Heart right ventricle (tissue), 16 donors: ENCODE measurements at regions of chr17 and their contacts with region 1.

Region 1: DNA sequence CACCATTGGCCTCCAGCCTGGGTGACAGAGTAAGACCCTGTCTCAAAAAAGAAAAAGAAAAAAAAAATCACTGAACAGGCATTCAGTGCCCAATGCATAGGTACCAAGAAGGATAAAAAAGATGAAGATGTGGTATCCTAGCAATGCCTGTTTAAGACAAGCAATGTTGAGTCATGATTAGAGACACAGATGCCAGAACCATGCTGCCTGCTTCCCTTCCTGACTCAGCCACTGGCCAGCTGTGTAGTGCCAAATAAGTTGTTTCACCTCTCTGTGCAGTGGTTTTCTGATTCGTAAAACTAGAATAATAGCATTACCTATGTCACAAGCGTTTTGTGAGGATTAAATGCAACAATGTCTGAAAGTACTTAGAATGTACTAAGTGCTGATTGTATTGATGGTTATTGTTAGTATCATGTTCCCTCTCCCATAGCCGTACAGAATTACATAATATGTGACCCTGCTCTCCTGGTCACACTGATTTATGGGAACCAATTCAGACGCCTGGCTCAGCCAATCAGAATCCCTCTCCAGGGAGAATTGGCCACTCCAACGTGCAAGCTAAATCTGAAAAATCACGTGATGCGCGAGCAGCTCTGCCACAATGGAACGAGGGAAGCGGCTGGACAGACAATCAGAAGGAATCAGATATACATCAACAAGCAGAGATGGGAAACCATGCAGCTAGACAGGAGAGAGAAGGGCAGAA is 241.9 kb downstream of the SLC39A11 start:
- DNase-seq: no peak
- ATAC-seq: no peak
- H3K4me3 ChIP-seq: no peak overlapping the region
- H3K27ac ChIP-seq: no peak overlapping the region
- H3K4me1 ChIP-seq: no peaks in the 10 kb centered on the region
- H3K27me3 ChIP-seq: no peaks in the 10 kb centered on the region
- CTCF ChIP-seq: no peak

Region 2: GRCh38 chr17:72916991-72917390 is 66.4 kb after region 1 on chr17:
- intact Hi-C with region 1: loop called in 1 of 10 experiments (anchors 10 kb)
- DNase-seq: no peak
- ATAC-seq: no peak
- H3K4me3 ChIP-seq: no peak overlapping the region
- H3K27ac ChIP-seq: no peak overlapping the region
- H3K4me1 ChIP-seq: peaks cover 0 to 10% (median 0%) of the 10 kb centered on the region in 9 donors
- H3K27me3 ChIP-seq: no peaks in the 10 kb centered on the region
- CTCF ChIP-seq: no peak